ENCODE measurements at regions of chr4 and their contacts with region 1.

Region 1: GRCh38 chr4:145180298-145181090 is at the start of gene OTUD4:
- DNase-seq: peak; percentile 95 to 97 (median 96)
- H3K4me3 ChIP-seq: peak within 1 kb of the TSS; percentile 84 to 96
- H3K4me3 Mint-ChIP-seq: peak within 1 kb of the TSS; percentile 89 to 98 (median 95)
- H3K27ac ChIP-seq: peak within 1 kb of the TSS; percentile 94
- H3K27ac Mint-ChIP-seq: peak within 1 kb of the TSS; percentile 96 to 99 (median 98)
- H3K4me1 ChIP-seq: peaks cover 40% of the 10 kb centered on the region
- H3K4me1 Mint-ChIP-seq: peaks cover 15 to 40% (median 28%) of the 10 kb centered on the region in 4 donors
- H3K27me3 ChIP-seq: no peaks in the 10 kb centered on the region
- H3K27me3 Mint-ChIP-seq: no peaks in the 10 kb centered on the region
- total RNA-seq, gene OTUD4: 60.1 to 61.3 TPM

Region 2: GRCh38 chr4:145132511-145133098 is 47.9 kb before region 1 on chr4:
- CTCF ChIA-PET with region 1: interaction called, 4 read pairs
- POLR2A ChIA-PET with region 1: no interaction called
- intact Hi-C with region 1: loop called (anchors 5 kb)
- DNase-seq: no peak
- H3K4me3 ChIP-seq: no peak overlapping the region
- H3K4me3 Mint-ChIP-seq: peak overlapping the region in 2 of 8 donors; percentile 0 to 2
- H3K27ac ChIP-seq: no peak overlapping the region
- H3K27ac Mint-ChIP-seq: peak overlapping the region; percentile 54 to 91 (median 89)
- H3K4me1 ChIP-seq: peaks cover 29% of the 10 kb centered on the region
- H3K4me1 Mint-ChIP-seq: peaks cover 32 to 67% (median 45%) of the 10 kb centered on the region in 4 donors
- H3K27me3 ChIP-seq: no peaks in the 10 kb centered on the region
- H3K27me3 Mint-ChIP-seq: no peaks in the 10 kb centered on the region

Region 3: DNA sequence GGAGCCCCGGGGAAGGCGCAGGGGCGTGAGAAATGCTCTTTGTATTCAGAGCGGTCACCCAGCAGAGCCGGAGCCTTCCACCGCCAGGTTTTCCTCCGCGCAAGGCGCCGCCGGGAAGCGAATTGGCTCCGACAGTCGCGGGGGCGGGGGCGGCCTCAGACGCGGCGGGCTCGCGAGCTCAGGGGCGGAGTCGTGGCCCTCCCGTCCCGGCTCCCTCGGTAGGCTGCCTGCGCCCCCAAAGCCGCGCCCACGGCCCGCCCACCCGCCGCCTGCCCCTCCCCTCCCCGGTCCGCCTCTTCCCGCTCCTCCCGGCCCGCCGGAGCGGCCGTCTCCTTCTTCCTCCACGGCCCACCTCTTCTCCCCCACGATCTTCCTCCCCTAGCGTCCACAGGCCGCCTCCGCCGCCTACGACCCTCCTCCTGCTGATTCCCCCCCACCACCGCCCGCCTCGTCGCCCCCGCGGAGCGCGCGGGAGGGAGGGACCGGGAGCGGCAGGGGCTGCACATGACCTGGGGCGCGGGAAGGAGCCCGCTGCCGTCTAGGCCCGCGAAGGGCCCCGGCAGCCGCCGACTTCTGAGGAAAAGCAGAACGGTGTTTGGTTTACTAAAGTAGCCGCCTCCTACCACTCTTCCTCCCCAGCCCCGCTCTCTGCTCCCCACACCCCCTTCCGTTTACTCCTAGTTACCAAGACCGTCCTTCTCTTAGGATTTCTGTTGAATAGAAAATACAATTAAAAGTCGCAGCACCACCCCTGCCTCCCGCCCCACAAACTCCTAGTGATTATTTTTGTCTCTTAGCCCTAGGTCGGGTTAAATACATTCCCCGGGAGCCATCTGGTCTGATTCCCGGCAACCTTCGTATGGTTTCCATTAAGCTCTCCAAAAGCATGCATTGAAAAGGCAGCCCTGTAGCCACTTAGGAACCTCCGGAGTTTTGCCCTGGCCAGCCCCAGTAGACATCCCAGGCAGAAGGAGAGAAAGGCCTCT is 552.7 kb after region 1 on chr4:
- CTCF ChIA-PET with region 1: no interaction called
- POLR2A ChIA-PET with region 1: no interaction called
- intact Hi-C with region 1: loop called (anchors 10 kb)
- DNase-seq: peak; percentile 67 to 83 (median 69)
- H3K4me3 ChIP-seq: peak overlapping the region in 1 of 2 donors; percentile 45
- H3K4me3 Mint-ChIP-seq: peak overlapping the region; percentile 76 to 84 (median 81)
- H3K27ac ChIP-seq: peak overlapping the region; percentile 13
- H3K27ac Mint-ChIP-seq: peak overlapping the region in 5 of 7 donors; percentile 18 to 87 (median 52)
- H3K4me1 ChIP-seq: peaks cover 5% of the 10 kb centered on the region
- H3K4me1 Mint-ChIP-seq: peaks cover 4 to 31% (median 10%) of the 10 kb centered on the region in 4 donors
- H3K27me3 ChIP-seq: no peaks in the 10 kb centered on the region
- H3K27me3 Mint-ChIP-seq: peaks cover 9 to 10% of the 10 kb centered on the region in 2 donors

Region 4: DNA sequence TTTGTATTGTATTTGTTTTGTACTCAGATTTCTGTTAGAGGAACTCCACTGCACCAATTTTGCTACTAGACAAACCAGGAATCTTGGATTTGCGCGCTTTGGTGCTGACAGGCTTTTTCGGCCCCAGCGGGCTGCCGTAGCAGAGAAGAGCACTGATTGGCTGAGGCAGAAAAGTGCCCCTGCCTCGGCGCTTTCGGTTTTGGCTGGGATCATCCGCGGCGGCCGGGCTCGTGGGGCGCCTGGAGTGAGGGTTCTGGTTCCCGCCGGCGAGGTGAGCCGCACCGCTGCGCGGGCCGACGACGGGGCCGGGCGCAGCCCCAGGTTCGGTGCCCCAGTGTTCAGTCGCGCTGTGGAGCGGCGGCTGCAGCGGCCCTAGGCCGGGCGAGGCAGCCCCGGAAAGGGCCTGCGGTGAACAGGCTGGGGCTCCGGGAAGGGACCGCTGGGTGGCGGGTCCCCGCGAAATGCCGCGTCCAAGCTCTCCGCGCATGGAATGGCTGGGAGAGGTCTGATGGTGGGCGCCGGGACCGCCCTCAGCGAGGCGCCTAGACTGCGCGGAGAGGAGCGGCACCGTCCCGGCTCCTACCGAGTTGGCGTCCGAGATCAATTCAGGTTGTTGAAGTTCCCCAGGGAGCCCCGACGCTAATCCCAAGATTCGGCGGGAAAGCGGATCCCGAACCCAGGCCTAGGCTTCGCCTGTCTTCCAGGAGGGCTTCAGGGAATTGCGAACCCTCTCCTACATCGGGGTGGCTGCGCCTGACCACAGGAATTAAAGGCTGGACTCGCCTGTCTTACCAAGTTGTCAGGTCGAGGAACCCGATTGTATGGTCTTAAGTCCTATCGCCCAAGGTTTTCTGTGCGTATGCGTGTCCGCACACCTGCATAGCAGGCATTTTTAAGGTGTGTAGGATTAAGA is 995.3 kb after region 1 on chr4 and contains the start of gene LSM6:
- CTCF ChIA-PET with region 1: no interaction called
- POLR2A ChIA-PET with region 1: no interaction called
- intact Hi-C with region 1: loop called (anchors 5 kb)
- DNase-seq: peak; percentile 83 to 87 (median 84)
- H3K4me3 ChIP-seq: peak within 1 kb of the TSS; percentile 39 to 96
- H3K4me3 Mint-ChIP-seq: peak within 1 kb of the TSS; percentile 86 to 96 (median 92)
- H3K27ac ChIP-seq: peak within 1 kb of the TSS; percentile 81
- H3K27ac Mint-ChIP-seq: peak within 1 kb of the TSS; percentile 93 to 98 (median 97)
- H3K4me1 ChIP-seq: peaks cover 53% of the 10 kb centered on the region
- H3K4me1 Mint-ChIP-seq: peaks cover 34 to 63% (median 42%) of the 10 kb centered on the region in 4 donors
- H3K27me3 ChIP-seq: no peaks in the 10 kb centered on the region
- H3K27me3 Mint-ChIP-seq: no peaks in the 10 kb centered on the region
- total RNA-seq, gene LSM6: 47.7 to 54.0 TPM

Measured in CD4-positive, alpha-beta memory T cell (primary cell).